Endothelial cell of umbilical vein (primary cell): ENCODE measurements at regions of chrX and their contacts with region 1.

Region 1: DNA sequence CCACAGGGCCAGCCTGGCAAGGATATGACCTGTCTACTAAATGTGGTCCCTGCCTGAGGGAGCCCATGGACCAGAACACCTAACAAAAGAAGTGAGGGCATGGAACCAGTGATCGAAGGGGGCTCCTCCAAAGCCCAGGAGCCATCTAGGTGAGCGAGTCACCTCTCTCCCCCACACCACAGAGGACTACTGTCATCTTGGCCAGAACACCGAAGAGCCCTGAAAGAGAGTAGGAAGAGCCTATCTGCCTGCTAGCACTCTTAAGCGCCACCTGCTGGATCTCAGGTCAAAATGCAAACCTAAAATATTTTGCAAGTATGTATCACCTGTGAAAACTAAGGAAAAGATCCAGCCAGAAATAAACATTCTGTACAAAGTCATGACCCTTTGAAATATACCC is 137.9 kb upstream of the ZXDB start:
- DNase-seq: peak; percentile 36
- H3K4me3 ChIP-seq: no peak overlapping the region
- H3K27ac ChIP-seq: no peak overlapping the region
- H3K4me1 ChIP-seq: peaks cover 42% of the 10 kb centered on the region
- H3K27me3 ChIP-seq: no peaks in the 10 kb centered on the region
- CTCF ChIP-seq: peak; percentile 35 to 44
- POLR2A ChIP-seq: no peak

Region 2: DNA sequence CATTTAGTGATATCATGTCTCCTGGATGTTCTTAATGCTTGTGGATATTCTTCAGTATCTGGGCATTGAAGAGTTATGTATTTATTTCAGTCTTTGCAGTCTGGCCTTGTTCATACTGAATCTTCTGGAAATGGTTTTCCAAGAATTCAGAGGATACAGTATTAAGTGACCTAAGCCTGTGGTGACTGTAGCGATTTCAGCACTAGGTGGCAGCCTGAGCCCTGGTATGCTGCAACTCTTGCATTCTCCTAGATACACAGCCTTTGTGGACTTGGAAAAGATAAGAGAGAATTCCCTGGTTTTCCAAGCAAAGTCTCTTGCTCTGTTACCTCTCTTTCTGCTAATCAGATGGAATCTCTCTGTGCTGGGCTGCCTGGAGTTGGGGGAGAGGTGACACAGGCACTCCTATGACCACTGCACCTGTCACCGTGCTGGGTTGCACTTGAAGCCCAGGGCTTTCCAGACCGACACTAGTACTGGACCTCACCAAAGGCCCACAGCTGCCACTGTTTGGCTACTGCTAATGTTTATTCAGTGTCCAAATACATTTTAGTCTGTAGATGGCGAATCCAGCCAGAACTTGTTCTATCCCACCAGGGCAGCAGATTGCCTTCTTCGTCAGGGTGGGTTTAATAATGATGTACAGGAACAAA is 297.4 kb before region 1 on chrX:
- CTCF ChIA-PET with region 1: interaction called, 10 read pairs
- POLR2A ChIA-PET with region 1: no interaction called
- dilution Hi-C with region 1: no loop called
- intact Hi-C with region 1: loop called (anchors 1 kb)
- DNase-seq: peak; percentile 48
- H3K4me3 ChIP-seq: no peak overlapping the region
- H3K27ac ChIP-seq: no peak overlapping the region
- H3K4me1 ChIP-seq: no peaks in the 10 kb centered on the region
- H3K27me3 ChIP-seq: no peaks in the 10 kb centered on the region
- CTCF ChIP-seq: peak; percentile 15 to 55
- POLR2A ChIP-seq: no peak

Region 3: DNA sequence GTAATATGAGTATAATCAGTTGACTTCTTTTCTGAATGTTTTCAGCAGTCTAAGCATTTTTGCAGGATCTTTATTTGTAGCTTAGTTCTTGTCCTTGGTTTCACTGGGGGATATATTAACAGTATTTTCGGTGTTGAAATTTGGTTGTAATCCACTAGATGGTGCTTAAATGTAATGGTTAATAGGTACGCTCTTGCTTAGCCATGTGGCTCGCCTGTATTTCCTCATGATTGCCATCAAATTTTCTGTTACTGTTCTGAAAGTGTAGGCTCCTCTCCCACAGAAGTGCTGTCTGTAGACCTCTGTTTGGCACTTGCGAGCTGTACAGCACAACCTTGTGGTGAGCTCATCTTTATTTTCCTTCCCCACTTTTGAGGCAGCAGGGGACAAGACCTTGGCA is 171.3 kb before region 1 on chrX:
- CTCF ChIA-PET with region 1: no interaction called
- POLR2A ChIA-PET with region 1: no interaction called
- dilution Hi-C with region 1: no loop called
- intact Hi-C with region 1: loop called (anchors 2 kb)
- DNase-seq: no peak
- H3K4me3 ChIP-seq: no peak overlapping the region
- H3K27ac ChIP-seq: no peak overlapping the region
- H3K4me1 ChIP-seq: no peaks in the 10 kb centered on the region
- H3K27me3 ChIP-seq: no peaks in the 10 kb centered on the region
- CTCF ChIP-seq: no peak
- POLR2A ChIP-seq: no peak

Region 4: GRCh38 chrX:57329008-57329407 is 124.9 kb before region 1 on chrX:
- CTCF ChIA-PET with region 1: interaction called, 3 read pairs
- POLR2A ChIA-PET with region 1: no interaction called
- dilution Hi-C with region 1: no loop called
- intact Hi-C with region 1: loop called (anchors 1 kb)
- DNase-seq: peak; percentile 13
- H3K4me3 ChIP-seq: no peak overlapping the region
- H3K27ac ChIP-seq: no peak overlapping the region
- H3K4me1 ChIP-seq: no peaks in the 10 kb centered on the region
- H3K27me3 ChIP-seq: no peaks in the 10 kb centered on the region
- CTCF ChIP-seq: peak; percentile 27 to 52
- POLR2A ChIP-seq: no peak

Region 5: GRCh38 chrX:57595381-57595811 is 141.5 kb after region 1 on chrX:
- CTCF ChIA-PET with region 1: no interaction called
- POLR2A ChIA-PET with region 1: no interaction called
- dilution Hi-C with region 1: no loop called
- intact Hi-C with region 1: loop called (anchors 5 kb)
- DNase-seq: peak; percentile 61
- H3K4me3 ChIP-seq: peak overlapping the region in 1 of 3 experiments; percentile 71
- H3K27ac ChIP-seq: peak overlapping the region; percentile 81
- H3K4me1 ChIP-seq: peaks cover 33% of the 10 kb centered on the region
- H3K27me3 ChIP-seq: no peaks in the 10 kb centered on the region
- CTCF ChIP-seq: no peak
- POLR2A ChIP-seq: no peak

Region 6: DNA sequence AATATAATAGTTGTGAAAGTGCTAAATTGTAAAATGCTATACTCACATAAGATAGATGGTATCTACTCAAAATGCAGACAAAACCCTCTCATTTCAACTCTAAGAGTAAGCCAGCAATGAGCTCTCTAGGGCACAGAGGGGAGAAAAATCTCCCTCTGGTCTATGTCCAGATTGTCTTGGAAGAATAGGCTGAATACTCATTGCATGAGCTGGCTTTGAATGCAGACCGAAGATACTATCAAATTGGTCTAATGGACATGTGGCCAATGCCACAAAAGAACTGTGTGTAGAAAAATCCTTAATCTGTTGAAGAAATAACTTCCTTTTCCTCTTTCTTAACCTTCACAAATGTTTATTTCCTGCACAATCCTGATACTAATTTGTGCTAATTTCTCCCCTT is 452.9 kb after region 1 on chrX:
- CTCF ChIA-PET with region 1: no interaction called
- POLR2A ChIA-PET with region 1: no interaction called
- dilution Hi-C with region 1: no loop called
- intact Hi-C with region 1: loop called (anchors 5 kb)
- DNase-seq: peak; percentile 71
- H3K4me3 ChIP-seq: peak overlapping the region in 1 of 3 experiments; percentile 70
- H3K27ac ChIP-seq: peak overlapping the region; percentile 83
- H3K4me1 ChIP-seq: peaks cover 34% of the 10 kb centered on the region
- H3K27me3 ChIP-seq: no peaks in the 10 kb centered on the region
- CTCF ChIP-seq: no peak
- POLR2A ChIP-seq: no peak